ENCODE measurements at regions of chr2 and their contacts with region 1.

Region 1: GRCh38 chr2:227509824-227510619 is 38.1 kb downstream of the AGFG1 start:
- DNase-seq: no peak
- ATAC-seq: no peak
- H3K4me3 ChIP-seq: no peak overlapping the region
- H3K4me3 Mint-ChIP-seq: peak overlapping the region in 4 of 10 donors; percentile 5 to 35 (median 6)
- H3K27ac ChIP-seq: no peak overlapping the region
- H3K27ac Mint-ChIP-seq: peak overlapping the region in 5 of 9 donors; percentile 3 to 74 (median 6)
- H3K4me1 ChIP-seq: peaks cover 8 to 21% of the 10 kb centered on the region in 2 donors
- H3K4me1 Mint-ChIP-seq: peaks cover 51 to 95% (median 88%) of the 10 kb centered on the region in 7 donors
- H3K27me3 ChIP-seq: no peaks in the 10 kb centered on the region
- H3K27me3 Mint-ChIP-seq: no peaks in the 10 kb centered on the region

Region 2: GRCh38 chr2:227479865-227480475 is 30.1 kb before region 1 on chr2:
- CTCF ChIA-PET with region 1: no interaction called
- POLR2A ChIA-PET with region 1: no interaction called
- intact Hi-C with region 1: loop called in 1 of 2 experiments (anchors 5 kb)
- DNase-seq: peak in 2 of 9 donors; percentile 12 to 14
- ATAC-seq: peak; percentile 71
- H3K4me3 ChIP-seq: no peak overlapping the region
- H3K4me3 Mint-ChIP-seq: peak overlapping the region in 8 of 10 donors; percentile 7 to 59 (median 32)
- H3K27ac ChIP-seq: peak overlapping the region; percentile 2
- H3K27ac Mint-ChIP-seq: peak overlapping the region; percentile 0 to 85 (median 26)
- H3K4me1 ChIP-seq: peaks cover 28 to 31% of the 10 kb centered on the region in 2 donors
- H3K4me1 Mint-ChIP-seq: peaks cover 44 to 98% (median 68%) of the 10 kb centered on the region in 7 donors
- H3K27me3 ChIP-seq: no peaks in the 10 kb centered on the region
- H3K27me3 Mint-ChIP-seq: no peaks in the 10 kb centered on the region

Region 3: DNA sequence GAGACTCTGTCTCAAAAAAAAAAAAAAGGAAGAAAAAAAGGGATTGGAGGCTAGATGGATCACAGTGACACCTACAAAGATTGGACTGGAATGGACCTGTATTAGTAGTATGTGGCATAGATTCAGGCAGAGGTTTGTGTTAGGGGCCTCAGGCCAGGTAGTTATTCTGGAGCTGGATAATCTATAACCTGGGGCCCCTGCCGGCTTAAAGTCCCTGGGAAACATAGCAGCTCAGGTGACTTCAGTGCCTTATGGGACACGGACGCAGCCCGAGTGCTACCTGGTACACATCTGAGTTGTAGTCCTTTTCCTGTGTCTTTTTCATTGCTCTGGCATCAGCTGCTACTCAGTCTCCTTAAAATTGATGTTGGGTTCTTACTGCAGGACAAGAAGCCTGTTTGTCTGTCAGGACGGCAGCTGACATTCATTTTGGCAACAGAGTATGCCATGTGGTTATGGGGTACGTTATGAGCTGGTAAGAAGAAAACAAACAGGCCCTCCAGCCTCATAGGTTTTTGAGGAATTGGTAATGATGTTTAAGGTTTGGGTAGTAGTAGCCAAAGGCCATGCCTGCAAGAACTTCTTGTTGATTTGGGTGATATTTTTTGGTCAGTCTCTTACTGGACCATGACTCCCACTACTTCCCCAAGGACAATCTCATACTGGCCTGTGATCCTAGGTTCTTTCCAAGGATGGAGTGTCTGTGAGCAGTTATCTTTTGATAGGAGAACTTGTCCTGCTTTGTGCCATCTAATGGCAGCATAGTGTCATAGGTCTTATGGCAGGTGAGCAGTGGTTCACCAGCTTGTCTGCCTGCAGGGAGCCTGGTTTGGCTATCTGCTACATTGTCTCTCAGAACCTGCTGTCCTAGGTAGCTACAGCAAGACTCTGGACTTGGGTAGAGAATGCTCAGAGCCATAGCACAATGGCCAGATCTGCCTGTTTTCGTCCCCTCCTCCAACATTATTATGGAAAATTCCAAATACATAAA is 10.1 kb before region 1 on chr2:
- CTCF ChIA-PET with region 1: no interaction called
- POLR2A ChIA-PET with region 1: no interaction called
- intact Hi-C with region 1: loop called in 1 of 2 experiments (anchors 2 kb)
- DNase-seq: no peak
- ATAC-seq: no peak
- H3K4me3 ChIP-seq: no peak overlapping the region
- H3K4me3 Mint-ChIP-seq: peak overlapping the region in 1 of 10 donors; percentile 5
- H3K27ac ChIP-seq: no peak overlapping the region
- H3K27ac Mint-ChIP-seq: peak overlapping the region in 3 of 9 donors; percentile 36 to 48 (median 47)
- H3K4me1 ChIP-seq: peaks cover 0 to 10% of the 10 kb centered on the region in 2 donors
- H3K4me1 Mint-ChIP-seq: peaks cover 11 to 87% (median 71%) of the 10 kb centered on the region in 7 donors
- H3K27me3 ChIP-seq: no peaks in the 10 kb centered on the region
- H3K27me3 Mint-ChIP-seq: no peaks in the 10 kb centered on the region